B cell (primary cell): ENCODE measurements at regions of chr12 and their contacts with region 1.

Region 1: GRCh38 chr12:95574799-95575452 is 23.6 kb upstream of the USP44 start:
- DNase-seq: peak; percentile 14
- ATAC-seq: no peak
- H3K4me3 ChIP-seq: peak overlapping the region in 1 of 5 experiments; percentile 43
- H3K4me3 Mint-ChIP-seq: peak overlapping the region; percentile 82
- H3K27ac ChIP-seq: peak overlapping the region; percentile 72 to 74
- H3K27ac Mint-ChIP-seq: peak overlapping the region; percentile 92
- H3K4me1 ChIP-seq: peaks cover 41 to 46% of the 10 kb centered on the region in 2 donors
- H3K4me1 Mint-ChIP-seq: peaks cover 43% of the 10 kb centered on the region
- H3K27me3 ChIP-seq: peaks cover 0 to 4% (median 0%) of the 10 kb centered on the region in 4 experiments
- H3K27me3 Mint-ChIP-seq: no peaks in the 10 kb centered on the region
- CTCF ChIP-seq: peak; percentile 27

Region 2: DNA sequence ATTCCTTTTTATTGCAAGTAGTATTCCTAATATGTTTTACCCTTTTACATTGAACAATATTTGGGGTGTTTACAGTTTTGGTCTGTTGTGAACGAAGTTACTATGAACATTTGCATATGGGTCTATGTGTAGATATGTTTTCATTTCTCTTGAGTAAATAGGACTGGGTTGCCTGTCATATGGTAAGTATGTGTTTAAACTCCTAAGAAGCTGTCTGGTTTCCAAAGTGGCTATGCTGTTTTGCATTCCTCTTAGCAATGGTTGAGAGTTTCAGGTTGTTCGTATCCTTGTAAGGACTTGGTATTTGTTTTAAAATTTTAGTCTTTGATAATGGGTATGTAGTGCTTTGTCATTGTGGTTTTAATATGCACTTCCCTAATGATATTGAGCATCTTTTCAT is 94.7 kb before region 1 on chr12:
- CTCF ChIA-PET with region 1: no interaction called
- POLR2A ChIA-PET with region 1: interaction called, 11 read pairs
- intact Hi-C with region 1: no loop called
- DNase-seq: no peak
- ATAC-seq: no peak
- H3K4me3 ChIP-seq: no peak overlapping the region
- H3K4me3 Mint-ChIP-seq: no peak overlapping the region
- H3K27ac ChIP-seq: no peak overlapping the region
- H3K27ac Mint-ChIP-seq: no peak overlapping the region
- H3K4me1 ChIP-seq: peaks cover 4 to 17% of the 10 kb centered on the region in 2 donors
- H3K4me1 Mint-ChIP-seq: peaks cover 52% of the 10 kb centered on the region
- H3K27me3 ChIP-seq: no peaks in the 10 kb centered on the region
- H3K27me3 Mint-ChIP-seq: no peaks in the 10 kb centered on the region
- CTCF ChIP-seq: no peak

Region 3: GRCh38 chr12:95516757-95517156 is 58.2 kb before region 1 on chr12:
- CTCF ChIA-PET with region 1: no interaction called
- POLR2A ChIA-PET with region 1: no interaction called
- intact Hi-C with region 1: no loop called
- DNase-seq: no peak
- ATAC-seq: no peak
- H3K4me3 ChIP-seq: no peak overlapping the region
- H3K4me3 Mint-ChIP-seq: no peak overlapping the region
- H3K27ac ChIP-seq: no peak overlapping the region
- H3K27ac Mint-ChIP-seq: no peak overlapping the region
- H3K4me1 ChIP-seq: peaks cover 0 to 2% of the 10 kb centered on the region in 2 donors
- H3K4me1 Mint-ChIP-seq: peaks cover 6% of the 10 kb centered on the region
- H3K27me3 ChIP-seq: no peaks in the 10 kb centered on the region
- H3K27me3 Mint-ChIP-seq: no peaks in the 10 kb centered on the region
- CTCF ChIP-seq: no peak

Region 4: GRCh38 chr12:95548539-95549391 is 26.2 kb before region 1 on chr12:
- CTCF ChIA-PET with region 1: interaction called, 3 read pairs
- POLR2A ChIA-PET with region 1: no interaction called
- intact Hi-C with region 1: loop called (anchors 1 kb)
- DNase-seq: peak; percentile 87
- ATAC-seq: peak; percentile 91
- H3K4me3 ChIP-seq: peak overlapping the region; percentile 52 to 91 (median 81)
- H3K4me3 Mint-ChIP-seq: peak overlapping the region; percentile 92
- H3K27ac ChIP-seq: peak overlapping the region; percentile 73 to 78
- H3K27ac Mint-ChIP-seq: peak overlapping the region; percentile 85
- H3K4me1 ChIP-seq: peaks cover 12 to 13% of the 10 kb centered on the region in 2 donors
- H3K4me1 Mint-ChIP-seq: peaks cover 25% of the 10 kb centered on the region
- H3K27me3 ChIP-seq: peaks cover 0 to 7% (median 0%) of the 10 kb centered on the region in 4 experiments
- H3K27me3 Mint-ChIP-seq: peaks cover 6% of the 10 kb centered on the region
- CTCF ChIP-seq: no peak

Region 5: GRCh38 chr12:96427269-96427729 is 852.4 kb after region 1 on chr12:
- CTCF ChIA-PET with region 1: no interaction called
- POLR2A ChIA-PET with region 1: no interaction called
- intact Hi-C with region 1: no loop called
- DNase-seq: no peak
- ATAC-seq: no peak
- H3K4me3 ChIP-seq: no peak overlapping the region
- H3K4me3 Mint-ChIP-seq: no peak overlapping the region
- H3K27ac ChIP-seq: no peak overlapping the region
- H3K27ac Mint-ChIP-seq: no peak overlapping the region
- H3K4me1 ChIP-seq: no peaks in the 10 kb centered on the region
- H3K4me1 Mint-ChIP-seq: no peaks in the 10 kb centered on the region
- H3K27me3 ChIP-seq: no peaks in the 10 kb centered on the region
- H3K27me3 Mint-ChIP-seq: no peaks in the 10 kb centered on the region
- CTCF ChIP-seq: no peak

Region 6: GRCh38 chr12:96456265-96456974 is 881.5 kb after region 1 on chr12:
- CTCF ChIA-PET with region 1: no interaction called
- POLR2A ChIA-PET with region 1: interaction called, 15 read pairs
- intact Hi-C with region 1: no loop called
- DNase-seq: peak; percentile 77
- ATAC-seq: peak; percentile 92
- H3K4me3 ChIP-seq: no peak overlapping the region
- H3K4me3 Mint-ChIP-seq: peak overlapping the region; percentile 55
- H3K27ac ChIP-seq: no peak overlapping the region
- H3K27ac Mint-ChIP-seq: peak overlapping the region; percentile 74
- H3K4me1 ChIP-seq: peaks cover 24 to 25% of the 10 kb centered on the region in 2 donors
- H3K4me1 Mint-ChIP-seq: peaks cover 23% of the 10 kb centered on the region
- H3K27me3 ChIP-seq: no peaks in the 10 kb centered on the region
- H3K27me3 Mint-ChIP-seq: no peaks in the 10 kb centered on the region
- CTCF ChIP-seq: no peak